ENCODE measurements at regions of chr14 and their contacts with region 1.

Region 1: DNA sequence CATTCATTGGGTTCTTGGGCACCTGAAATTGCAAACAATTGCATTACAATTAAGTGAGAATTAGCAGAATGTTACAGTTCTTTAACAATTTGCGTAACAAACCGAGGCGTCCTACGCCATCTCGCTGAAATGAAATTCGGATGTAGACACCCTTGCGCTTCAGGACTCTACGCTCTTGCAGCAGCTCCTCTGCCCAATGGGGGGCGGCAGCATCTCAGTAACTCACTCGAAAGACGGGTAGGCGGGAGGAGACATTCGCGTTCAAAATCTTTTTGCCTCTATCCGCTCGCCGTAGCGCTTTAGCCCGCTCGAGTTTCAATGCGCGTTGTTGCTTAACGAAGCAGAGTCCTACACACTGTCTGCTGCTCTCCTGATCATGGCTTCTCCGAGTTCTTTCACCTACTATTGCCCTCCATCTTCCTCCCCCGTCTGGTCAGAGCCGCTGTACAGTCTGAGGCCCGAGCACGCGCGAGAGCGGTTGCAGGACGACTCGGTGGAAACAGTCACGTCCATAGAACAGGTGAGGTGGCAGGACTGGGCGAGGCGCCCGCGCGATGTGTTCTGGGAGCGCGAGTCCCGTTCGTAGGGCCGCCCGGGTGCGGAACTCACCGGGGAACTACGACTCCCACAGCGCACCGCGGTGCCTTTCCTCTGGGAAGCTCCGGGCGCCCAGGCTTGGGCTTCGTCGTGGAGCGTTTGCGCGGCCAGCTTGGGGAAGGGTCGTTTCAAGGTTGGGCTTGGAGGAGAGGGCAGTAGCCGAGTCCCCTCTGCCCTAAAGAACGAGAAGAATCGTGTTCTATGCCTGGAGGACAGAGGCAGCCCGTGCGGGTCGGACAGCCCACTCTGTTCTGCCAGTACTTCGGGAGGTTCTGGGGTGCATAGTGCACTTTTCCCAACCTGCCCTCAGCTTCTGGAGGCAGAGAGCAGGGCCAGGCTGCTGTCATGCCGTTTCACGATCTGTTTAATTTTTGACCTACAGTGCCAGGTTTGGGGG is at the start of gene FNTB:
- DNase-seq: peak; percentile 90
- H3K4me3 Mint-ChIP-seq: peak within 1 kb of the TSS; percentile 98
- H3K27ac Mint-ChIP-seq: peak within 1 kb of the TSS; percentile 99
- H3K4me1 Mint-ChIP-seq: peaks cover 51% of the 10 kb centered on the region
- H3K27me3 Mint-ChIP-seq: peaks cover 22% of the 10 kb centered on the region
- total RNA-seq, gene FNTB: 14.3 and 17.8 TPM in 2 replicates

Region 2: GRCh38 chr14:64387694-64388532 is 599.0 kb before region 1 on chr14 and contains the start of gene MTHFD1:
- intact Hi-C with region 1: loop called (anchors 5 kb)
- DNase-seq: peak; percentile 96
- H3K4me3 Mint-ChIP-seq: peak within 1 kb of the TSS; percentile 97
- H3K27ac Mint-ChIP-seq: peak within 1 kb of the TSS; percentile 90
- H3K4me1 Mint-ChIP-seq: peaks cover 29% of the 10 kb centered on the region
- H3K27me3 Mint-ChIP-seq: no peaks in the 10 kb centered on the region
- total RNA-seq, gene MTHFD1: 241 and 244 TPM in 2 replicates

Region 3: DNA sequence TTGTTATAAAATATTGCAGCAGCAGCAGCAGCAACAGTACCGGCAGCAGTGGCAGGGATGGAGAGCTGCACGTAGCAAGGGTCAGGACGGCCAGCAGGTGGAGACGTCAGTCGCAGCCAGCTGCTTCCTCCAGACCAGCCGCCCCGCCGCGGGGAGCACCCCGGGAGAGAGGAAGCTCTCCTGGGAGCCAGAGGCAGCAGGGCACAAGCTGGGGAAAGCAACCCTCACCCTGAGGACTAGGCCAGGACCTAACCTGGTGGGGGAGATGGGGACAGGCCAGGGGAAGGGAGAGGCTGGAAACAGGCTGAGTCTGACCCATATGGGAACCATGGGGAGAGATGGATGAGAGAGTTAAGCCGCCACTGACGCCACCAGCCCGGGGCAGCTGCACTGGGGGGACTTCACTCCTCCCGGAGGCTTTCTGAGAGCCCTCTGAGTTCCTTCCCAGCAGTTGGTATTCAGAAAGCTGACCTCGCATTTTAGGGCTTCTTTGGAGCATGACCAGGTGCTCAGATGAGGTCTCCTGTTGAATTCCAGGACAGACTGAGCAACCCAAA is 163.5 kb before region 1 on chr14:
- intact Hi-C with region 1: loop called (anchors 1 kb)
- DNase-seq: peak; percentile 48
- H3K4me3 Mint-ChIP-seq: peak overlapping the region; percentile 23
- H3K27ac Mint-ChIP-seq: no peak overlapping the region
- H3K4me1 Mint-ChIP-seq: peaks cover 6% of the 10 kb centered on the region
- H3K27me3 Mint-ChIP-seq: peaks cover 30% of the 10 kb centered on the region

Region 4: DNA sequence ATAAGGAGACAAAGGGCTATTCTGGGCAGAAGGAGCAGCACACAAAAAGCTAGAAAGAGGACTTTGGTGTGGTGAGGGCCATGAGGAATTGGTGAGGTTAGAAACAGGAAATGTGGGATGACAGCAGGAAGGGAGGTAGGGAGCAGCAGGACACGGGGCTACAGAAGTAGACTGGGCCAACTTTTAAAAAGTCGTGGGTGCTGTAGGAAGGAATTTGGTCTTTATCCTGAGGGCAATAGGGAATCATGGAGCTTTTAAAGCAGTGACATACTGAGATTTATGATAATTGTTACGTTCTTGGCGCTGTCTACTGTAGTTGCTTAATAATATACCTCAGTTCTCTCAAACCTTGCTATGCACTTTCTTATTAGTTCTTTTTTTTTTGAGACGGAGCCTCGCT is 80.9 kb before region 1 on chr14:
- intact Hi-C with region 1: no loop called
- DNase-seq: no peak
- H3K4me3 Mint-ChIP-seq: no peak overlapping the region
- H3K27ac Mint-ChIP-seq: no peak overlapping the region
- H3K4me1 Mint-ChIP-seq: no peaks in the 10 kb centered on the region
- H3K27me3 Mint-ChIP-seq: peaks cover 35% of the 10 kb centered on the region

Region 5: GRCh38 chr14:64928239-64929013 is 58.4 kb before region 1 on chr14:
- intact Hi-C with region 1: loop called (anchors 5 kb)
- DNase-seq: no peak
- H3K4me3 Mint-ChIP-seq: no peak overlapping the region
- H3K27ac Mint-ChIP-seq: no peak overlapping the region
- H3K4me1 Mint-ChIP-seq: peaks cover 25% of the 10 kb centered on the region
- H3K27me3 Mint-ChIP-seq: no peaks in the 10 kb centered on the region

Region 6: GRCh38 chr14:65003394-65003793 is 16.5 kb after region 1 on chr14:
- intact Hi-C with region 1: loop called (anchors 1 kb)
- DNase-seq: no peak
- H3K4me3 Mint-ChIP-seq: no peak overlapping the region
- H3K27ac Mint-ChIP-seq: peak overlapping the region; percentile 79
- H3K4me1 Mint-ChIP-seq: peaks cover 39% of the 10 kb centered on the region
- H3K27me3 Mint-ChIP-seq: no peaks in the 10 kb centered on the region

Region 7: GRCh38 chr14:65025818-65026217 is 38.9 kb after region 1 on chr14:
- intact Hi-C with region 1: no loop called
- DNase-seq: no peak
- H3K4me3 Mint-ChIP-seq: no peak overlapping the region
- H3K27ac Mint-ChIP-seq: no peak overlapping the region
- H3K4me1 Mint-ChIP-seq: no peaks in the 10 kb centered on the region
- H3K27me3 Mint-ChIP-seq: no peaks in the 10 kb centered on the region

Region 8: GRCh38 chr14:65102441-65103149 is 115.7 kb after region 1 on chr14 and contains the start of gene MAX:
- intact Hi-C with region 1: loop called (anchors 1 kb)
- DNase-seq: peak; percentile 98
- H3K4me3 Mint-ChIP-seq: peak within 1 kb of the TSS; percentile 95
- H3K27ac Mint-ChIP-seq: peak within 1 kb of the TSS; percentile 95
- H3K4me1 Mint-ChIP-seq: peaks cover 33% of the 10 kb centered on the region
- H3K27me3 Mint-ChIP-seq: peaks cover 6% of the 10 kb centered on the region
- total RNA-seq, gene MAX: 135 and 137 TPM in 2 replicates

Region 9: GRCh38 chr14:65206448-65207096 is 219.7 kb after region 1 on chr14:
- intact Hi-C with region 1: loop called (anchors 5 kb)
- DNase-seq: no peak
- H3K4me3 Mint-ChIP-seq: peak overlapping the region; percentile 72
- H3K27ac Mint-ChIP-seq: peak overlapping the region; percentile 92
- H3K4me1 Mint-ChIP-seq: peaks cover 70% of the 10 kb centered on the region
- H3K27me3 Mint-ChIP-seq: no peaks in the 10 kb centered on the region